K562 (cell line): ENCODE measurements at regions of chr3 and their contacts with region 1.

Region 1: GRCh38 chr3:142595951-142596725 is at the start of gene PLS1:
- DNase-seq: peak; percentile 95 to 98 (median 98)
- ATAC-seq: peak; percentile 92
- H3K4me3 ChIP-seq: peak within 1 kb of the TSS; percentile 72
- H3K27ac ChIP-seq: peak within 1 kb of the TSS; percentile 62
- H3K4me1 ChIP-seq: peaks cover 0 to 14% of the 10 kb centered on the region in 2 experiments; a peak in 3 of 5 replicates
- H3K27me3 ChIP-seq: no peaks in the 10 kb centered on the region
- CTCF ChIP-seq: 0 out of 6 replicates have a peak, but pooled peaks of 1 of the 3 experiments have one; percentile 1
- EP300 ChIP-seq: no peak
- POLR2A ChIP-seq: peak; percentile 88
- RAD21 ChIP-seq: peak in 1 of 2 experiments; percentile 34; a peak in 2 of 4 replicates
- polyA plus RNA-seq, gene PLS1: 10.6 to 21.3 TPM

Region 2: DNA sequence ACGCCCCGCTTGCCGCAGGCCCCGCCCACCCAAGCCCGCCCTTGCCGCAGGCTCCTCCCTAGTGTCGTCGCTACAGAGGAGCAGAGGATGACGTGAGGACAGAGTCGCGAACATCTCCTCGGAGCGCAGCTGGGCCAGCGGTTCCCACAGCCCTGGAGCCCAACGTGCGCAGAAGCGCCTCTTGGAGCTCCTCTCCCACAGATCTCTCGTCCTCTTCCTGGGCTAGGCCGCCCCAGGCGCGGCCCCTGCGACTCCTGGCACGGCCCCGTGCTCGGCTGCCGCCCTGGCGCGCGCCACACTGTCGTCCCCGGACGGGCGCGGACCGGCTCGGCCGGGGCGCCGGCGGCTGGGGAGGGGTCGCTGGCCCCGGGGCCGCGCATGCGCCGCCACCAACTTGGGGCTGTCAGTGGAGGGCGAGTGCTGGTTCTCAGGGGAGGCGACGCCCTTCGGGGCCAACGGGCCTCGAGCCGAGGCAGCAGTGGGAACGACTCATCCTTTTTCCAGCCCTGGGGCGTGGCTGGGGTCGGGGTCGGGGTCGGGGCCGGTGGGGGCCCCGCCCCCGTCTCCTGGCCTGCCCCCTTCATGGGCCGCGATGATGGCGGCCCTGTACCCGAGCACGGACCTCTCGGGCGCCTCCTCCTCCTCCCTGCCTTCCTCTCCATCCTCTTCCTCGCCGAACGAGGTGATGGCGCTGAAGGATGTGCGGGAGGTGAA is 128.0 kb after region 1 on chr3 and contains the start of gene TRPC1:
- CTCF ChIA-PET with region 1: no interaction called
- POLR2A ChIA-PET with region 1: interaction called, 11 read pairs
- in situ Hi-C with region 1: no loop called
- intact Hi-C with region 1: loop called (anchors 5 kb)
- DNase-seq: peak; percentile 92 to 95 (median 95)
- ATAC-seq: peak; percentile 88
- H3K4me3 ChIP-seq: peak within 1 kb of the TSS; percentile 90
- H3K27ac ChIP-seq: peak within 1 kb of the TSS; percentile 89
- H3K4me1 ChIP-seq: peaks cover 5 to 11% of the 10 kb centered on the region in 2 experiments; a peak in 4 of 5 replicates
- H3K27me3 ChIP-seq: no peaks in the 10 kb centered on the region
- CTCF ChIP-seq: no peak
- EP300 ChIP-seq: no peak
- POLR2A ChIP-seq: peak; percentile 78
- RAD21 ChIP-seq: no peak
- polyA plus RNA-seq, gene TRPC1: 1.4 to 2.2 TPM